ENCODE measurements at regions of chr11 and their contacts with region 1.

Region 1: DNA sequence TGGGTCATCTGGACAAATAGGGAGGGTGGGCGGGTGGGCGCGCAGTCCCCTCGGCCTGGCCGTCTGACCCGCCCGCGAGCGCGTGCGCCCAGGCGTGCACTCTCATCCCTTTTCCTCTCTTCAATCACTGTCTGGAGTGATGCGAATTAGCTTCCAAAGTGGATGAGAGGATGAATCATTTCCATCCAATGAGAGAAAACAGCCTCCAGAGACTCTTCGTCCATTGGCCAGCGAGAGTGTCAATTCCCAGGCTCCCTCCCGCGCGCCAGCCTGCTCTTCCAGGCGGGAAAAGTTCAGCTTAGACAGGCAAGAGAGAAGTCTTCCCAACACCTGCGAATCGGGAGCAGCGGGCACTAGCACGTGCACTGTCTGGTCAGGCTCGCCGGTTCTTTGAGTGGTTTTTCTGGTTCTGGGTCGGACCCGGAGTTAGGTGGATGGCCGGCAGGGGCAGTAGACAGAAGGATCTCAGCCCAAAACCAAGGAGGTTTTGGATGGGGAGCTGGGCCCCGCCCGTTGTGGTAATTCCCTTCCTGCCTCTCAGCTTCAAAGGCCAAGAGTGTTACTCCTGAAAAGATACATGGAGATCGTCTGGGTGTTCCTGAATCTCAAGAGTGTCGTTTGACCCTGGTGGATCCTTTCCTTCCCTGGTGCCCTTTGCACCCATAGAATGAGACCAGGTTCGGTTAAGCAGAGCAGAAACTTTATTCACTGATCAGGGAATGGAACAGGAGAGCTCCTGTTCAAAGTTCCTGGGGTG is 33.4 kb upstream of the GLYATL1 start:
- DNase-seq: peak; percentile 89
- H3K4me3 ChIP-seq: peak overlapping the region; percentile 73 to 93
- H3K27ac ChIP-seq: peak overlapping the region in 1 of 2 experiments; percentile 79; a peak in 2 of 4 replicates
- H3K4me1 ChIP-seq: peaks cover 0 to 7% of the 10 kb centered on the region in 2 experiments; a peak in 2 of 4 replicates
- H3K27me3 ChIP-seq: no peaks in the 10 kb centered on the region
- CTCF ChIP-seq: peak; percentile 68
- EP300 ChIP-seq: no peak
- RAD21 ChIP-seq: no peak

Region 2: GRCh38 chr11:58923300-58923788 is 17.4 kb after region 1 on chr11:
- CTCF ChIA-PET with region 1: interaction called, 12 read pairs
- POLR2A ChIA-PET with region 1: interaction called, 3 read pairs
- DNase-seq: peak; percentile 13
- H3K4me3 ChIP-seq: peak overlapping the region; percentile 24 to 51; a peak in 3 of 4 replicates
- H3K27ac ChIP-seq: no peak overlapping the region
- H3K4me1 ChIP-seq: peaks cover 0 to 9% of the 10 kb centered on the region in 2 experiments; a peak in 2 of 4 replicates
- H3K27me3 ChIP-seq: no peaks in the 10 kb centered on the region
- CTCF ChIP-seq: peak; percentile 53
- EP300 ChIP-seq: no peak
- RAD21 ChIP-seq: peak; percentile 62